ENCODE measurements at regions of chr2 and their contacts with region 1.

Region 1: DNA sequence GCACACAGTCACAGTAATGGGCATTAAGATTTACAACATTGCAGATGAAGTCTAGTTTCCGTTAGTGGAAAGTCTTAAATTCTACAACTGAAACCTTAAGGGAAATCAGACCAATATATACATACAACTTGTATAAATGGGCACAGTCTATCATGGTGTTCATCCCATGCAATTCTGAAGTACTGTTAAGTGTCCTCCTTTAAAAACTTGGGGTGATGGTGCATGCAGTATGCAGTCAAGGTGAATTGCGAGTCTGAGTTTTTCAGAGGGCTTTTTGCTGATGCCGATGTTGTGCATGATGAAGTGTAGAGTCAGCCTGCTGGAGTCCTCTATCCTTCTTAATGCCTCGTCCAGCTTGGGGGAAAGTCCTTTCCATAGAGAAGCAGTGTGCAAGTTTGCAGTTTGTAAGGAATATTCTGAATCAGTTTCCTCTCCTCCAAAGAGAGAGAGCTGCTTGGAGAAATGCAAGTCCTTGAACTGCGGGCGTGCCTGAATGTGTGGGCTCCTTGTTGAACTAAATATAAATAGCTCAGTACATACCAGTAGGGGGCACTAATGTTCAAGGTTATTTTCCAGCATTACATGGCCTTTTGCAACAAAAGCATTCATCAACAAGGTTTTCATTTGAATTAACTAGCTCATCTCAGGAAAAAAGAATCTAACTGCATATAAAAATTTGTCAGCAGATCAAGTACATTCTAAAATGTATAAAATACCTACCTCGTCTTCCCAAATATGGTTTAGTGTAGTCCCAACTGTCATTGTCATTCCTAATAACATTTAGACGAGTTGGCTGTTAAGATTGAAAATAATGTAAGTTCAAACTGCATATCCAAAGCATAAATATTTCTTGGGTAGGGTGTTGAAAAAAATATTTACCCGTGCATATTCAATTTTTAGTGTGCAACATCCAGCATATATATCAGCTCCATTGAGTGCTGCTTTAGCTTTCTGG is 21.3 kb downstream of the HNRNPLL start:
- DNase-seq: peak; percentile 79 to 91 (median 85)
- H3K4me3 ChIP-seq: no peak overlapping the region
- H3K27ac ChIP-seq: no peak overlapping the region
- H3K4me1 ChIP-seq: peaks cover 0 to 3% (median 0%) of the 10 kb centered on the region in 4 experiments
- H3K27me3 ChIP-seq: no peaks in the 10 kb centered on the region

Region 2: GRCh38 chr2:38483776-38484501 is 97.5 kb before region 1 on chr2:
- CTCF ChIA-PET with region 1: no interaction called
- POLR2A ChIA-PET with region 1: no interaction called
- DNase-seq: no peak
- H3K4me3 ChIP-seq: no peak overlapping the region
- H3K27ac ChIP-seq: no peak overlapping the region
- H3K4me1 ChIP-seq: no peaks in the 10 kb centered on the region
- H3K27me3 ChIP-seq: no peaks in the 10 kb centered on the region

Region 3: GRCh38 chr2:38740851-38741731 is 159.6 kb after region 1 on chr2:
- CTCF ChIA-PET with region 1: interaction called, 203 read pairs
- POLR2A ChIA-PET with region 1: no interaction called
- DNase-seq: peak; percentile 67 to 85 (median 82)
- H3K4me3 ChIP-seq: no peak overlapping the region
- H3K27ac ChIP-seq: no peak overlapping the region
- H3K4me1 ChIP-seq: peaks cover 0 to 4% (median 1%) of the 10 kb centered on the region in 4 experiments
- H3K27me3 ChIP-seq: no peaks in the 10 kb centered on the region

Measured in common myeloid progenitor, CD34-positive (primary cell).